ENCODE measurements at regions of chr16 and their contacts with region 1.

Region 1: DNA sequence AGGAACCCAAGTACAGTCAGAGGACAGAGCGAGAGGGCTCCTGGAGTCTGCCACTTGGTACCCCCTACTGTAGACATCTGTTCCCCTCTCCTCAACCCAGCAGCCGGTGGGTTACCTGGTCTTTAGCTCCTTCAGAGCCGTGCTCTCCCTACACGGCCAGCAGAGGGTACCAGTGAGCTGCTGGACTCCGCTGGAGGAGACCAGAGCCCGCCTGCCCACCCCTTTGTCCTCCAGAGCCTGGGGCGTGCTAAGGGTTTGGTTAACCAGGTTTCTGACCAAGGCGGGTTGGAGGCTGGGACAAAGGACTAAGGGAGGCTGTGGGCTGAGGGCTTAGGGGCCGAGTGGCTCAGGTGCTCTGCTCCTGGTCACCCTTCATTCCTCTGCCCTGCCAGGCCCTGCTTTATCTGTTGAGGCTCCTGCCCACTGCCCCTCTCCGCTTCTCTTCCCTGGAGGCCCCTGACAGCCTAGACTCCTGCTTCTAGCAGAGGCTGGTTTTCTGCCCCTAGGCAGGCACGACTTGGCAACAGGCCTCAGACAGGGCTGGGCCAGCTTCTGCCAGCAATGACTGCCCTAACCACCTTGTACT is 2.7 kb upstream of the HSD11B2 start:
- DNase-seq: peak; percentile 33 to 84 (median 56)
- H3K4me3 ChIP-seq: no peak overlapping the region
- H3K27ac ChIP-seq: no peak overlapping the region
- H3K27me3 ChIP-seq: no peaks in the 10 kb centered on the region
- CTCF ChIP-seq: peak in 55 of 56 donors; percentile 32 to 82 (median 69)

Region 2: GRCh38 chr16:67470359-67470758 is 42.1 kb after region 1 on chr16:
- intact Hi-C with region 1: loop called in 1 of 2 experiments (anchors 1 kb)
- DNase-seq: peak; percentile 85 to 100 (median 92)
- H3K4me3 ChIP-seq: peak overlapping the region in 3 of 59 donors; percentile 6 to 12 (median 9)
- H3K27ac ChIP-seq: peak overlapping the region in 40 of 59 donors; percentile 3 to 83 (median 44)
- H3K27me3 ChIP-seq: no peaks in the 10 kb centered on the region
- CTCF ChIP-seq: peak in 24 of 56 donors; percentile 5 to 41 (median 22)

Region 3: GRCh38 chr16:67490335-67491096 is 62.3 kb after region 1 on chr16:
- intact Hi-C with region 1: no loop called
- DNase-seq: no peak
- H3K4me3 ChIP-seq: no peak overlapping the region
- H3K27ac ChIP-seq: peak overlapping the region in 20 of 59 donors; percentile 7 to 76 (median 38)
- H3K27me3 ChIP-seq: no peaks in the 10 kb centered on the region
- CTCF ChIP-seq: no peak